Activated CD8-positive, alpha-beta T cell treated with anti-CD3 and anti-CD28 coated beads for 36 hours (primary cell): ENCODE measurements at regions of chr5 and their contacts with region 1.

Region 1: DNA sequence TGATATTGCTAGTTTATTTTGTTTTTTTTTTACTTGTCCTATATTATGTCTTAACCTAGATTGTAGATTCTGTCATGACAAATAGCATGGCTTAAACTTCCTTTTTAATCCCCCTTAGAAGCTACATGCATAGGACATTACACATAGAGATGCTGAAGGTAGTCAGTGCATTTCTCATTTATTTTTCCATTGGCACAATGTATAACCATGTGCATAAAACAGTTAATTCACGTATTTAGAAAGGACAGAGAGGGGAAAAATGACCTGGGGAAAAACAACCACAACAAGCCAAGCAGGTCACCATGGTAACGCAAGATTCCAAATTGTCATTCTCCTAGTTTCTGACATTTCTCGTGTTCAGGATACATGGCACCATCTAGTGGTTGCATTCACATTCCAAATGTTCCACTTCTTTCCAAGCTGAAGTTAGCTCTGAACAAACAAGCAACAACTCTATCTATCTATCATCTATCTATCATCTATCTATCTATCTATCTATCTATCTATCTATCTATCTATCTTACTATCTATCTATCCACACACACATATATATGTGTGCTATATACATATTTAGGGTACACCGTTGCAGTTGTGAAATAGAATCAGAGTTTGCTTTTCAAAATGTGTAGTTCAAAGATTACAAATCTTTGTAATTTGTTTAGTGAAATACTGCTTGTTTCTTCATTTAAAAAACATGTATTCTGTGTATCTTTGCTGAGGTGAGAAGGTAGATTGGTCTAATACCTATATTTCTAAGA is 487.2 kb upstream of the ST8SIA4 start:
- DNase-seq: peak; percentile 1
- ATAC-seq: no peak
- H3K4me3 Mint-ChIP-seq: no peak overlapping the region
- H3K27ac Mint-ChIP-seq: no peak overlapping the region
- H3K4me1 Mint-ChIP-seq: no peaks in the 10 kb centered on the region
- H3K27me3 Mint-ChIP-seq: no peaks in the 10 kb centered on the region
- CTCF ChIP-seq: peak; percentile 49

Region 2: GRCh38 chr5:100430268-100431195 is 959.8 kb before region 1 on chr5:
- CTCF ChIA-PET with region 1: no interaction called
- POLR2A ChIA-PET with region 1: no interaction called
- intact Hi-C with region 1: loop called (anchors 5 kb)
- DNase-seq: peak; percentile 60
- ATAC-seq: peak; percentile 51
- H3K4me3 Mint-ChIP-seq: no peak overlapping the region
- H3K27ac Mint-ChIP-seq: no peak overlapping the region
- H3K4me1 Mint-ChIP-seq: no peaks in the 10 kb centered on the region
- H3K27me3 Mint-ChIP-seq: no peaks in the 10 kb centered on the region
- CTCF ChIP-seq: peak; percentile 73

Region 3: GRCh38 chr5:101346906-101347305 is 43.4 kb before region 1 on chr5:
- CTCF ChIA-PET with region 1: no interaction called
- POLR2A ChIA-PET with region 1: no interaction called
- intact Hi-C with region 1: no loop called
- DNase-seq: no peak
- ATAC-seq: no peak
- H3K4me3 Mint-ChIP-seq: no peak overlapping the region
- H3K27ac Mint-ChIP-seq: no peak overlapping the region
- H3K4me1 Mint-ChIP-seq: no peaks in the 10 kb centered on the region
- H3K27me3 Mint-ChIP-seq: peaks cover 2% of the 10 kb centered on the region
- CTCF ChIP-seq: no peak

Region 4: DNA sequence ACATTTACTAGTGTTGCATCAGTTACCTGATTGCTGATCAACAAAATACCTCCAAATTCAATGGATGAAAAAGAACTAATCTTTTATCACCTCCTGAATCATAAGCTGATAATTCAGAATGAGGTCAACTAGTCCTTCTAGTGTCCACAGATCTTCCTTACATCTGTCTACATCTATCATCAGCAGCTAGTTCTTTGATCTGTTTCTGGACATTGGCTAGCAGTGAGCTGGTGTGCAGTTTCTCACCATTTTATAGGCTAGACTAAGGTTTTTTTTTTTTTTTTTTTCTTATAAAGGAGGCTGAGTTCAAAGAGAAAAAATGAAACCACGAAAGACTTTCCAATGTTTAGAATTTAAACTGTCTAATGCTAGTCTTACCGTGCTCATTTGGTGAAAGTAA is 47.0 kb after region 1 on chr5:
- CTCF ChIA-PET with region 1: no interaction called
- POLR2A ChIA-PET with region 1: no interaction called
- intact Hi-C with region 1: no loop called
- DNase-seq: no peak
- ATAC-seq: no peak
- H3K4me3 Mint-ChIP-seq: no peak overlapping the region
- H3K27ac Mint-ChIP-seq: no peak overlapping the region
- H3K4me1 Mint-ChIP-seq: no peaks in the 10 kb centered on the region
- H3K27me3 Mint-ChIP-seq: no peaks in the 10 kb centered on the region
- CTCF ChIP-seq: no peak

Region 5: GRCh38 chr5:101611039-101611438 is 220.7 kb after region 1 on chr5:
- CTCF ChIA-PET with region 1: no interaction called
- POLR2A ChIA-PET with region 1: no interaction called
- intact Hi-C with region 1: no loop called
- DNase-seq: no peak
- ATAC-seq: no peak
- H3K4me3 Mint-ChIP-seq: no peak overlapping the region
- H3K27ac Mint-ChIP-seq: no peak overlapping the region
- H3K4me1 Mint-ChIP-seq: no peaks in the 10 kb centered on the region
- H3K27me3 Mint-ChIP-seq: no peaks in the 10 kb centered on the region
- CTCF ChIP-seq: no peak